Dorsolateral prefrontal cortex (tissue), 120 donors: ENCODE measurements at regions of chr19 and their contacts with region 1.

Region 1: DNA sequence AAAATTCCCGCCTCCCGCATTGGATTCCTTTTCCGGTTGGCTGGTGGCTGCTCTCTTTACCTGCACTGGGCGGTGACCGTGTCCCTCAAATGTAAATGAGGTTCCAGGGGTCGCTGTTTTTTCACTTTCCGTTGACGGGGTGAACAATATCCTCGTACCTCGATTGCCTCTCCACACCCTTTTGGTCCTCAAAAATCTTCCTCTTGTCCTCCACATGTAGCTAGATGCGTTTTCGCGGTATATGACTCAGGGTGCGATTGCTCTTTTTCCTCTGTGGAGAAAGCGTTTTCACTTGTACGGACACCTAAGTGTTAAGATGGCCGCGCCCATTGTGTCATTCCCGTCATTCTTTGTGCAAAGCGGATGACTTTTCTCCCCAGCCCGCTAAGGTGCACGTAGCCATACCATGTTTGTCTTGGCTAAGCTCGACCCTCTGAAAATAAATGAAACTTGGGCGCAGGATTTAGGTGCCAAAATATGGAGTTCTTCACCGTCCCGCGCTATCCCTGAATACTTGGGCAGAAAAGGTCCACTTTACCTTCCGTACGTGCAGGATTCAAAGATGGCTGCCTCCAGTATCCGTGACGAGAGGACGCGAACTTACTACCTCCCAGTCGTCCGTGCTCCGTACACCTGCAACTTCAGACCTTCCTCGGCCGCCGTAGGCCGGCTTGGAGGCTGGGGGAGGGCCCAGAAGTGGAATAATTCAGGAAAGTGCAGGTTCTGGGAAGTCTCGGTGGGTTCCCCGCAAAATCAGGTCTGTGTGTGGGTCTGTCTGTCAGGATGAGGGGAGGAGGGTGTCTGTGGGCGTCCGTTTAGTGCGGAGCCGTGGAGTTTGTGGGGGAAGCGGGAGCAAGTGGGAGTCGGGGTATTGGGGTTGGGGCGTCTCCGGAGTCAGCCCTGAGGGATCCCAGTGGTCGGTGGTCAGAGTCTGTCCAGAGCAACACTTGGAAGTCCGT is at the start of gene ZNF613:
- DNase-seq: peak; percentile 72 to 92 (median 90)
- H3K4me3 ChIP-seq: peak within 1 kb of the TSS; percentile 61 to 95 (median 84)
- H3K27ac ChIP-seq: peak within 1 kb of the TSS; percentile 56 to 98 (median 94)
- H3K27me3 ChIP-seq: no peaks in the 10 kb centered on the region
- CTCF ChIP-seq: peak in 52 of 56 donors; percentile 15 to 64 (median 39)
- total RNA-seq, gene ZNF613: 3.2 to 14.0 (median 7.5) TPM

Region 2: DNA sequence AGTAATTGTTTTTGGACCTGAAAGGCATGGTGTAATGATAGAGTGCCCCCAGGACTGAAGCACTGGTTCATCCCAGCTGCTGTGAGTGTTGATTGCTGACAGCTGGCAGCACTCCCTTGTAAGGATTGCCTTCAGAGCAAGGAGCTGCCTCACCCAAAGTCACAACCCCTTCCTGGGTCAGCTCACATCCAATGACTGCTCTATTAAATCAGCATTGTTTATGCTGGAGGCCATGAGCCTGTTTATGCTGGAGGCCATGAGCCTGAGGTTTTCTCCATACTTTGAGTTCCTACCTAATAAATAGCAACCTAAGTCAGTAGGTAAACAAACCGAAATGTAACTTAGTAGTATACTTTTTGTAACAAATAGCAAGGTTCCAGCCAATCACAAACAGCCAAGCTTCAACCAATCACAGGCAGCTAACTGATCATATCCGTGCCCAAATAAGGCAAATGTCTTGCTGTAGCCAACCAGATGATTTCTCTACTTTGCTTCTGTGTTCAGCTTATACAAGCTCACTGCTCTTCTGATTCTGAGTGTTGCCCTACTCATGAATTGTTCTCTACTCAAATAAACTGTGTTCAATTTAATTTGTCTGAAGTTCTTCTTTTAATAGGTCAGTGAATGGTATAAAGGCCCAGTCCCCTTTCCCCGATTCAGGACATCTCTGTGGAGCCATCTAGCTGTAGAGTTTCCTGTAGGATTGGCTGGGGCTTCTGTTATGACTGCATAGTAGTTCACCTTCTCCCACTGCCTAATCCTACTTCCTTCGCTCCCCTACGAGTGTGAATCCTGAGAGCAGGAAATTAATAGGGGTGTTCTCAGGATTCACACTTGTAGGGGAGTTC is 245.5 kb before region 1 on chr19:
- intact Hi-C with region 1: no loop called
- DNase-seq: no peak
- H3K4me3 ChIP-seq: no peak overlapping the region
- H3K27ac ChIP-seq: no peak overlapping the region
- H3K27me3 ChIP-seq: peaks cover 0 to 9% (median 0%) of the 10 kb centered on the region in 45 donors
- CTCF ChIP-seq: no peak

Region 3: GRCh38 chr19:51887522-51888498 is 39.3 kb before region 1 on chr19 and contains the start of gene ZNF577:
- intact Hi-C with region 1: loop called in 1 of 2 experiments (anchors 5 kb)
- DNase-seq: peak; percentile 77 to 92 (median 88)
- H3K4me3 ChIP-seq: peak within 1 kb of the TSS; percentile 24 to 76 (median 66)
- H3K27ac ChIP-seq: peak within 1 kb of the TSS in 37 of 59 donors; percentile 4 to 85 (median 60)
- H3K27me3 ChIP-seq: no peaks in the 10 kb centered on the region
- CTCF ChIP-seq: peak in 10 of 56 donors; percentile 4 to 33 (median 11)
- total RNA-seq, gene ZNF577: 18.9 to 73.4 (median 37.6) TPM

Region 4: GRCh38 chr19:51904331-51905165 is 22.5 kb before region 1 on chr19 and contains the start of gene ZNF649:
- intact Hi-C with region 1: loop called (anchors 2 kb)
- DNase-seq: peak; percentile 66 to 86 (median 80)
- H3K4me3 ChIP-seq: peak within 1 kb of the TSS; percentile 63 to 95 (median 84)
- H3K27ac ChIP-seq: peak within 1 kb of the TSS in 58 of 59 donors; percentile 60 to 95 (median 86)
- H3K27me3 ChIP-seq: peaks cover 0 to 20% (median 2%) of the 10 kb centered on the region in 45 donors
- CTCF ChIP-seq: peak in 30 of 56 donors; percentile 8 to 52 (median 28)
- total RNA-seq, gene ZNF649: 11.3 to 46.1 (median 21.5) TPM

Region 5: DNA sequence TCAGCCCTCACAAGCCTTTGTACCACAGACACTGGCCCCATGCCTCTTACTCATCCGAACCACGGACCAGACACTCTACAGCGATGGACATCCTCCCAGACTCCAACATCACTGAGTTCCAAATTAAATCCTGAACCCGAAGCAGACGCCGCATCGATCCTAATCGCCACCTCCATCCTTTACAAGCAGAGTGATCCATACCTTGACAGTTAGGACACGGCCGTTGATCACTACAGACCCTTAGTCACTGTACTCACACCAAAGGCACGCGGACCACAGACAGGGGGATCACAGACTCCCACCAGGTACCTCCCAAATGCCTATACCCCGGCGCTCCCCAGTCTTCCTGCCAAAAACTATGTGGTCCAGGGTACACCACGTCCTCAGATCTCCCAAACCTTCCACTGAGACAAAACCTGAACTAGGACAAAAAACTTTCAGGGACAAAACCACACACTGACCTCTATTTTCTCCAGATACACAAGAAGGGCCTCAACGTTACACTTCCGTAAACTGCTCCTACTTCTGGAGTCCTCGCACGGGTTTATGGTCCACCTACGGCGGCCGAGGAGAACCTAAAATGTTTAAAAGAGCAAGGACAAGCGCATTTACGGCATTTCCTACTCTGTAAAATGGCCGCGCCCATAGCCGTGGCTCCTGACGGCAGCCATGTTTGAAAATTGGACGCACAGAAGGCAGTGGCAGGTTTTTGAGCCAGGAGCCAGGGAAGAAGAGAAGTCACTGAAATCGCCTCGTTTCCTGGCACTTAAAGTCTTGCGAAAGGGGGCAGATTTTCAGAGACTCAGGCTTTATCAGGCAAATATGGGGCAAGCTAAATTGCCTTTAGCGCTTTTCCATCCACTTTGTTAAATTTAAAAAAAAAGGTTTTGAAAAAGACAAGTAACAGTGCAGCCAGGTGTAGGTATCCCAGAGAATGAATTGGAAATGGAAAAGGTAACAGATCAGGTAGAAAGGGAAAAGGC is 59.5 kb after region 1 on chr19 and contains the start of gene ZNF350:
- intact Hi-C with region 1: loop called (anchors 5 to 10 kb)
- DNase-seq: peak; percentile 91 to 99 (median 96)
- H3K4me3 ChIP-seq: peak within 1 kb of the TSS; percentile 59 to 98 (median 84)
- H3K27ac ChIP-seq: peak within 1 kb of the TSS in 50 of 59 donors; percentile 9 to 92 (median 62)
- H3K27me3 ChIP-seq: no peaks in the 10 kb centered on the region
- CTCF ChIP-seq: peak in 28 of 56 donors; percentile 4 to 54 (median 34)
- total RNA-seq, gene ZNF350: 8.6 to 24.7 (median 13.9) TPM

Region 6: GRCh38 chr19:52028027-52028779 is 101.1 kb after region 1 on chr19 and contains the start of gene ZNF614:
- intact Hi-C with region 1: loop called in 1 of 2 experiments (anchors 2 kb)
- DNase-seq: peak; percentile 83 to 93 (median 90)
- H3K4me3 ChIP-seq: peak within 1 kb of the TSS; percentile 58 to 98 (median 86)
- H3K27ac ChIP-seq: peak within 1 kb of the TSS; percentile 83 to 99 (median 95)
- H3K27me3 ChIP-seq: no peaks in the 10 kb centered on the region
- CTCF ChIP-seq: peak in 14 of 56 donors; percentile 7 to 40 (median 18)
- total RNA-seq, gene ZNF614: 7.1 to 15.2 (median 9.7) TPM